Activated B cell treated with CpG ODN at 0.5 μM for 24 hours (primary cell): ENCODE measurements at regions of chr3 and their contacts with region 1.

Region 1: DNA sequence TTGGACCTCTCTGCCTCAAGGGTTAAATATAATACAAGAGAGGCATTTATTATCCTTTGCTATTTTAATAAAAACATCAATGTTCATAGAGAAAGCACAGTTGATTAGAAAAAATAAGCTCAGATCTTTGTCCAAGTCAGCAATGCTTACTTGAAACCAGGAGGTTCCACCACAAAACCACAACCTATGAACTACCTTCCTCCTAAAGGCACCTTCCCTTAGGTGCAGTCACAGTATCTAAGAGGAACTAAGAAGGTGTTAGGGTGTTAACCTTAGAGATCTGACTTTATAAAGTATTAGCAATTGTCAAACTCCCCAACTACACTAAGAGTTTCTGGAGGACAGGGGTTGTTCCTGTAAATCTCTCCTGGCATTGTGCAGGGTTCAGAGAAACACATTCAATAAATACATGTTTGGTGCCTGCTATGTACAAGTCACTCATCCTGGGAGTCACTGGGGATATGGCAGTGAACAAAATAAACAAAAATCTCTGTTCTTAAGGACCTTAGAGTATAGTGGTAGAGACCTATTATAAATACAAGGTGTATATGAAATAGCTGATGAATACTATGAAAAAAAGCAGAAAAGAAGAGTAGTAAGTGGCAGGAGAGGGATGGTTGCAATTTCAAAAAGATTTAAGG is 208.6 kb downstream of the NFKBIZ start:
- DNase-seq: no peak
- ATAC-seq: peak; percentile 75
- H3K4me3 Mint-ChIP-seq: peak overlapping the region; percentile 42
- H3K27ac Mint-ChIP-seq: peak overlapping the region; percentile 97
- H3K4me1 Mint-ChIP-seq: peaks cover 61% of the 10 kb centered on the region
- H3K27me3 Mint-ChIP-seq: no peaks in the 10 kb centered on the region
- CTCF ChIP-seq: no peak

Region 2: DNA sequence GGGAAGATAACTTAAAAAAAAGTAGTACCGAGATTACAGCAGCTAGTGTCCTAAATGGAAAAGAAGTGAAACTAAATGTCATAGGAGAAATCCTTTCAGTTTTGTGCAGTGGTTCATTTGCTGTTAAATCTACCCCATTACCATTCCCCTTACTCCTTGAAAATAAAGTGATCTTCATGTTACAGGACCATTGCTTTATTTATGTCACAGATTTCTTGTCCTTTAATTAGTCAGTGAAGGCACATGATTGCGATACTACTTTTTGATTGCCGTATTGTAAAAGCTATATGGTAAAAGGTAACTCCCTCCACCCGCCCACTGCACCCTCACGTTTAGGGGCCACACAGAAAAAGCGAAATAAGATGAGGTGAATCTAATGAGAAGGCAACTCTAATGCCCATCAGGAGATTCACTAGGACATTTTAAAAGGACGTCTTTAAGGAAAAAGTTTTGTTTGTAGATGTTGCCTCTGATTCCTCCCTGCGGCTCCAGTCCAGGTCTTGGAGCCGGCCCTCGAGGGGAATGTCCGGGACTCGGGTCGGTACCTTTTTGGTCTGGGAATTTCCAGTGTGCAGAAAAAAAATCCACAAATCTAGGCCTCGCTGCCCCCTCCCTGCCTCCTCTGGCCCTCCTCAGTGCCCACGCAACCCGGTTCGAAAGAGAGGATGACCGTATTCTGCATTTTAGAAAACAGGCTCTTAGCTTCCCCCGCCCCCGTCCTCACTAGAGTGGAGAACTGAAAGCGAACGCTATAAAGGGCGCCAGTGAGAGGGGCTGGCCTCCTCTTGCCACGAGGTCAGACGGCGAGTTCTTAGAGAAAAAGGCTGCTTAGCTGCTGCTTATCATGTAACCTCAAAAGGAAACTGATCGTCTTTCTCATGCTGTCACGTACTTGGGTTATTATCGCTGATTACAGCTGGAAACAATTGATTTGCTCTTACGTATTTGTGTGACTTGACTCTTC is 230.4 kb before region 1 on chr3:
- CTCF ChIA-PET with region 1: no interaction called
- POLR2A ChIA-PET with region 1: interaction called, 11 read pairs
- intact Hi-C with region 1: loop called (anchors 1 kb)
- DNase-seq: peak; percentile 68
- ATAC-seq: peak; percentile 86
- H3K4me3 Mint-ChIP-seq: peak overlapping the region; percentile 87
- H3K27ac Mint-ChIP-seq: peak overlapping the region; percentile 98
- H3K4me1 Mint-ChIP-seq: peaks cover 66% of the 10 kb centered on the region
- H3K27me3 Mint-ChIP-seq: no peaks in the 10 kb centered on the region
- CTCF ChIP-seq: no peak

Region 3: GRCh38 chr3:101988591-101988990 is 69.3 kb before region 1 on chr3:
- CTCF ChIA-PET with region 1: no interaction called
- POLR2A ChIA-PET with region 1: interaction called, 4 read pairs
- intact Hi-C with region 1: loop called (anchors 2 kb)
- DNase-seq: no peak
- ATAC-seq: peak; percentile 36
- H3K4me3 Mint-ChIP-seq: no peak overlapping the region
- H3K27ac Mint-ChIP-seq: peak overlapping the region; percentile 75
- H3K4me1 Mint-ChIP-seq: peaks cover 52% of the 10 kb centered on the region
- H3K27me3 Mint-ChIP-seq: no peaks in the 10 kb centered on the region
- CTCF ChIP-seq: no peak

Region 4: DNA sequence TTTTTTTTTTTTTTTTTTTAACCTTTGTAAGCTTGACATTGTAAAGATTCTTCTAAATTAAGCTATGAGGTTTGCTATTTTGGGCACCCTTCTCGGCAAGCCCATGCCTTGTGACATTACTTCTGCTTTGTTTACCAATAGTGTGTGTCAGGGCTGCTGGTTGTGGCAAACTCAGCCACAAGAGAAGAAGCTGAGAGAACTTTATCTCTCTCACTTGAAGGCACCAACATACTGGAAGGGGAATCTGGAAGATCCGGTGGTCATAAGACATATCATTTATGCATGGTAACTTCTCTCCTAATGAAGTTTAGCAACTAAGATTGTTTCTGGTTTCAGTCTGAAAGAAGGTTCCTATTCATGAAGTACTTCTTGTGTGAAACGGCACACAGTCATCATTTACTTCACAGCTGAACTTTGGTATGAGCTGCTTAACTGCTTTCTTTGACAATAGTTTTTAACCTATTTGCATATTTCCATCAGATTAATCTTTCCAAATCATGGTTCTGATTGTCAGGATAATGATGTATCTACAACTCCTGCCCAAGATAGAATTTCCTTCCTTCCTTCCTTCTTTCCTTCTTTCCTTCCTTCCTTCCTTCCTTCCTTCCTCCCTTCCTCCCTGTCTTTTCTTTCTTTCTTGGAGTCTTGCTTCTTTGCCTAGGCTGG is 19.3 kb before region 1 on chr3:
- CTCF ChIA-PET with region 1: interaction called, 5 read pairs
- POLR2A ChIA-PET with region 1: interaction called, 18 read pairs
- intact Hi-C with region 1: loop called (anchors 1 kb)
- DNase-seq: no peak
- ATAC-seq: peak; percentile 82
- H3K4me3 Mint-ChIP-seq: peak overlapping the region; percentile 56
- H3K27ac Mint-ChIP-seq: peak overlapping the region; percentile 91
- H3K4me1 Mint-ChIP-seq: peaks cover 43% of the 10 kb centered on the region
- H3K27me3 Mint-ChIP-seq: no peaks in the 10 kb centered on the region
- CTCF ChIP-seq: no peak

Region 5: DNA sequence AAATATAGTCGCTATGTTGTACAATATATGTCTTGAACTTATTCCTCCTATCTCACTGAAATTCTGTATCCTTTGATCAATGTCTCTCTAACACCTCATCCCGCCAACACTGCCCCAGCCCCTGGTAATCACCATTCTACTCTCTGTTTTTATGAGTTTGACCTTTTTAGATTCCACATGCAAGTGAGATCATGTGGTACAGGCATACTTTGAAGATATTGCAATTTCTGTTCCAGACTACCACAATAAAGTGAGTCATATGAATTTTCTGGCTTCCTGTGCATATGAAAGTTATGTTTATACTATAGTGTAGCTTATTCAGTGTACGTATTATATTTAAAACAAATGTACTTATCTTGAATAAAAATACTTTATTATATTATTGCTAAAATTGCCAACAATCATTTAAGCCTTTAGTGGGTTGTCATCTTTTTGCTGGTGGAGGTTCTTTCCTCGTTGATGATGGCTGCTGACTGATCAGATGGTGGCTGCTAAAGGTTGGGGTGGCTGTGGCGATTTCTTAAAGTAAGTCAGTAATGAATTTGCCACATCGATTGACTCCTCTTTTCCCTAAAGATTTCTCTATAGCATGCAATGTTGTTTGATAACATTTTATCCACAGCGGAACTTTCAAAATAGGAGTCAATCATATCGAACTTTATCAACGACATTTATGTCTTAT is 48.7 kb after region 1 on chr3:
- CTCF ChIA-PET with region 1: no interaction called
- POLR2A ChIA-PET with region 1: no interaction called
- intact Hi-C with region 1: no loop called
- DNase-seq: no peak
- ATAC-seq: no peak
- H3K4me3 Mint-ChIP-seq: no peak overlapping the region
- H3K27ac Mint-ChIP-seq: no peak overlapping the region
- H3K4me1 Mint-ChIP-seq: no peaks in the 10 kb centered on the region
- H3K27me3 Mint-ChIP-seq: no peaks in the 10 kb centered on the region
- CTCF ChIP-seq: no peak

Region 6: GRCh38 chr3:102163036-102163827 is 105.3 kb after region 1 on chr3:
- CTCF ChIA-PET with region 1: no interaction called
- POLR2A ChIA-PET with region 1: no interaction called
- intact Hi-C with region 1: no loop called
- DNase-seq: no peak
- ATAC-seq: no peak
- H3K4me3 Mint-ChIP-seq: no peak overlapping the region
- H3K27ac Mint-ChIP-seq: no peak overlapping the region
- H3K4me1 Mint-ChIP-seq: peaks cover 5% of the 10 kb centered on the region
- H3K27me3 Mint-ChIP-seq: no peaks in the 10 kb centered on the region
- CTCF ChIP-seq: no peak